CD14-positive monocyte (primary cell): ENCODE measurements at regions of chr6 and their contacts with region 1.

Region 1: GRCh38 chr6:31246050-31246521 is 25.8 kb downstream of the HLA-C start:
- DNase-seq: no peak
- H3K4me3 ChIP-seq: no peak overlapping the region
- H3K4me3 Mint-ChIP-seq: no peak overlapping the region
- H3K27ac ChIP-seq: no peak overlapping the region
- H3K27ac Mint-ChIP-seq: no peak overlapping the region
- H3K4me1 ChIP-seq: no peaks in the 10 kb centered on the region
- H3K4me1 Mint-ChIP-seq: no peaks in the 10 kb centered on the region
- H3K27me3 ChIP-seq: no peaks in the 10 kb centered on the region
- H3K27me3 Mint-ChIP-seq: peaks cover 1 to 10% (median 9%) of the 10 kb centered on the region in 3 donors
- CTCF ChIP-seq: no peak

Region 2: GRCh38 chr6:31204751-31205145 is 41.3 kb before region 1 on chr6:
- intact Hi-C with region 1: no loop called
- DNase-seq: peak in 2 of 3 donors; percentile 11 to 36
- H3K4me3 ChIP-seq: peak overlapping the region in 1 of 3 experiments; percentile 96
- H3K4me3 Mint-ChIP-seq: peak overlapping the region; percentile 79 to 94
- H3K27ac ChIP-seq: peak overlapping the region; percentile 59 to 97
- H3K27ac Mint-ChIP-seq: peak overlapping the region; percentile 94 to 99 (median 97)
- H3K4me1 ChIP-seq: peaks cover 48 to 63% of the 10 kb centered on the region in 2 donors
- H3K4me1 Mint-ChIP-seq: peaks cover 73% of the 10 kb centered on the region
- H3K27me3 ChIP-seq: no peaks in the 10 kb centered on the region
- H3K27me3 Mint-ChIP-seq: peaks cover 0 to 3% (median 0%) of the 10 kb centered on the region in 3 donors
- CTCF ChIP-seq: no peak

Region 3: GRCh38 chr6:31321820-31322219 is 75.7 kb after region 1 on chr6:
- intact Hi-C with region 1: loop called in 1 of 2 experiments (anchors 2 kb)
- DNase-seq: no peak
- H3K4me3 ChIP-seq: no peak overlapping the region
- H3K4me3 Mint-ChIP-seq: no peak overlapping the region
- H3K27ac ChIP-seq: no peak overlapping the region
- H3K27ac Mint-ChIP-seq: peak overlapping the region in 1 of 7 donors; percentile 19
- H3K4me1 ChIP-seq: no peaks in the 10 kb centered on the region
- H3K4me1 Mint-ChIP-seq: no peaks in the 10 kb centered on the region
- H3K27me3 ChIP-seq: peaks cover 0 to 4% of the 10 kb centered on the region in 2 donors
- H3K27me3 Mint-ChIP-seq: peaks cover 10 to 29% (median 14%) of the 10 kb centered on the region in 3 donors
- CTCF ChIP-seq: no peak